ENCODE measurements at regions of chr13 and their contacts with region 1.

Region 1: DNA sequence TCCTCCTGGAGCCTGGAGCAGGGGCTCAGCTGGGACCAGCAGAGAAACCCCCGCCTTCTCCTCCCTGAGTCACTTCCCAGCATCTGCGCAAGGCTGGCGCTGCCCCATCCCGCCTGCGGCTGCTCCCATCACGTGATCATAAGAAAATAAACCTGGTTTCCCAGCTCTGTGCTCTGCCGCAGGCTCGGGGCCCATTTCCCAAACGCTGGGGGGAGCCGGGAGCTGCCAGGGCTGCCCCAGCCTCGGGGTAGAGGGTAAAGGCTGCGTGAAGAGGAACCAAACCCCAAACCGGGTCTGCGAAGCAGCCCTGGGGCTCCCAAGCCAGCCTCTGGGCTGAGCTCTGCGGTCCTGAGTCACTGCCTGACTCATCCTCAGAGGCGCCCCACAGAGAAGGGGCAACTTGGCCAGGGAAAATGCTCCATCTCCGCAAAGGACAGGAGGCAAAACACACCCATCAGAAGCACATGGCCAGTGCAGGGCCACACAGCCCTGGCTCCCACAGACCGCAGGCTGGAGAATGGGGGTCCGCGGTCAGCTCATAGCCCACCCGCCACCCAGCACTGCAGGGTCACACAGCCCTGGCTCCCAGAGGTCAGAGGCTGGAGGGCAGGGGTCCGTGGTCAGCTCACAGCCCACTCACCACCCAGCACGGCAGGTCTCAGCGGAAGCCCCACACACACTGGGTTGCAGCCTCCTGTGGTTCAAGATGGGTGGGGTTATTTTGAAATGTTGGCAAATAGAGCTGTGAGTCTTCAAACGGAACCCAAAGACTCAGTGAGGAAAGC is 67.1 kb downstream of the RASA3 start:
- DNase-seq: peak; percentile 89
- H3K4me3 Mint-ChIP-seq: peak overlapping the region; percentile 84
- H3K27ac Mint-ChIP-seq: peak overlapping the region; percentile 93
- H3K4me1 Mint-ChIP-seq: peaks cover 51% of the 10 kb centered on the region
- H3K27me3 Mint-ChIP-seq: no peaks in the 10 kb centered on the region

Region 2: GRCh38 chr13:114035583-114036531 is 29.5 kb before region 1 on chr13:
- intact Hi-C with region 1: no loop called
- DNase-seq: no peak
- H3K4me3 Mint-ChIP-seq: no peak overlapping the region
- H3K27ac Mint-ChIP-seq: no peak overlapping the region
- H3K4me1 Mint-ChIP-seq: no peaks in the 10 kb centered on the region
- H3K27me3 Mint-ChIP-seq: no peaks in the 10 kb centered on the region

Region 3: DNA sequence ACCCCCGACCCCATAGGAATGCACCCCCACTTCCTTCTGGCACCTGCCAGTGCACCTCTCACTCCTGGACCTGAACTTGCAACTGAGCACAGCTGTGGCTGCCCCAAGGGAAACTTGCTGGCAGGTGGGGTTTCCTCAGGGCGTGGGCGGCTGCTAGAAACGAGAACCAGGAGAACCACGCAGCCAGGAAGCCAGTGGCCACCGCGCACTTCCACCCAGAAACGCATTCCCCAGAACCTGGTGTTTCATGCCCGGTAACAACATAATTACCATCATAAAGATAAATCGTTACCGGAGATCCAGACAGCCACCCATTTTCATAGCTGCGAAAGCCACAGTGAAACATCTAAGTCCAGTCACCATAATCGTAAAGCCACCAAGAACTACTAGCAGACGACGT is 16.3 kb before region 1 on chr13:
- intact Hi-C with region 1: loop called (anchors 2 kb)
- DNase-seq: peak; percentile 73
- H3K4me3 Mint-ChIP-seq: peak overlapping the region; percentile 68
- H3K27ac Mint-ChIP-seq: peak overlapping the region; percentile 53
- H3K4me1 Mint-ChIP-seq: peaks cover 32% of the 10 kb centered on the region
- H3K27me3 Mint-ChIP-seq: no peaks in the 10 kb centered on the region

Region 4: DNA sequence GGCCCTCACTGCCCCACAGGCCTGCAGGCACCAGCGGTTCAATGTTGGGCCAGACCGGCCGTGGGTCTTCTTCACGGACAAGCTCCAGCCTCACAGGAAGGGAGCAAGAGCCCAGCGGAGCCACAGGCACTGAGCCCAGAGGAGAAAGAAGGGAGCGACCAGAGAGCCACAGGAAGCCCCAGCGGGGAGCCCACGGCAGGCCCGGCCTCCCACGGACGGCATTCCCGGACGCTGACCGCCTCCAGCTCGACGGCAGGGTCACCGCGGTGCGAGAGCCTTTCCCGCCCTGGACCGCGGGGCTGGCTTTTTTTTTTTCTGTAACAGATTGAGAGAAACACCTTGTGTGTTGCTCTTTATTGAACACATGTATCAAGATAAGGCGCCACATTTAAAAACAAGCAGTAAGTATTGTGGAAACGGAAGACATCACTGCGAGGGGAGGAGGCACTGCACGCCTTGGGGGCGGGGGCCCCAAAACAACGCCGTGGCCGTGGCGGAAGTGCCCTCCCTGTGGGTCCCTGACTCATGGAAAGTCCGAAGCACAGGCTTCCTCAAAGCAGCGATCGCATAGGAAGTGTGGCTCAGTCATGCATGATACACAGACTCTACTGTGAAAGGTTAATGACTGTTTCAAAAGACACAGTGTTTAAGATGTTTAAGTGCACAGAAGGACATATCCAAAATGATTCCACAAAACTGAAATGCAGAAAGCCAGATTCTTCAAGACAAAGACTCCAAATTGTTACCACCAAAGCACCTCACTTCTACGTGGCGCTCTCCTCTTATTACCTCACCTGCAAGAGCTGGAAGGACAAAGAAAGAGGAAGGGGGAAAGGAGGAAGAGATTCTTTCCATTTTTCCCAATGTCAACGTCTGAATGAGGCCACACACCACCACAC is 63.5 kb after region 1 on chr13:
- intact Hi-C with region 1: loop called (anchors 1 kb)
- DNase-seq: peak; percentile 96
- H3K4me3 Mint-ChIP-seq: peak overlapping the region; percentile 99
- H3K27ac Mint-ChIP-seq: peak overlapping the region; percentile 89
- H3K4me1 Mint-ChIP-seq: peaks cover 63% of the 10 kb centered on the region
- H3K27me3 Mint-ChIP-seq: peaks cover 2% of the 10 kb centered on the region

Region 5: GRCh38 chr13:114226699-114227323 is 161.5 kb after region 1 on chr13:
- intact Hi-C with region 1: loop called (anchors 1 kb)
- DNase-seq: peak; percentile 95
- H3K4me3 Mint-ChIP-seq: peak overlapping the region; percentile 37
- H3K27ac Mint-ChIP-seq: no peak overlapping the region
- H3K4me1 Mint-ChIP-seq: peaks cover 27% of the 10 kb centered on the region
- H3K27me3 Mint-ChIP-seq: peaks cover 14% of the 10 kb centered on the region

Measured in activated CD4-positive, alpha-beta T cell treated with anti-CD3 and anti-CD28 coated beads, Interleukin-2, amount 10 ng/mL, durations not matched to agents 24 days and 14 days (primary cell).